ENCODE measurements at regions of chr14 and their contacts with region 1.

Region 1: DNA sequence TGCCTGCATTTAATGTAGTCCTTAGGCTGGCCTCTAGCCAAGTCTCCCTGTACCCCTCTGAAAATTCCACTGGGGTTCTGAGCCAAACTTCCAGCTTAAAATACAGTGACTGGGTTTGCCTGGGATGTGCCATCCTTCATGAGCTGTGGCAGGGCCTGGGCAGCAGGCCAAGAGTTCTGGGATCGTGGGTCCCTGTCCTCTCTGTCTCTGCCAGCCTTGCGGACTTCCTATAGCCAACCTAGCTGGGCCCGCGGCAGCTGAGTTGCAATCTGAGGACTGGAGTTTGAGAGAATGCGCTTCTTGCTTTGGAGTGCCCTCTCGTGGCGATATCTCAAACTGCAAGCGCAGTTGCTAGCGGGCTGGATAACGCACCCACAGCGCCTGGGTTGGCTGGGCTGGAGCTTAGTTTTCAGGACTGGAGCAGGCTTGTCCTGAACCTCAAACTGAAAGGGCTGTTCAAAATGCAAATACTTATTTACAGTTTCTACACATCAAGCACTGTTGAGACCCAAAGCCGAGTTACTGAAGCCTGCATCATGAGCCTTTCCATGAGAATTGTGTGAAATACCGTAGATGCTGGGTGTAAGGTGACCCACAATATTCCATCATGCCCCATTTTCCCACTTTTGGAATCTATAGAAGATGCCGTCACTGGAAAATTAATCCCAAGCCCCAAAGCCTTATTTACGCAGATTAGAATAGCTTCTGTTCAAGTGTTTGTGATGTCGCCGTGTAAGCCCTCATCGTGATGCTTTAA is 7.3 kb upstream of the IFI27L2 start:
- DNase-seq: peak; percentile 81 to 96 (median 91)
- ATAC-seq: peak; percentile 99
- H3K4me3 ChIP-seq: no peak overlapping the region
- H3K4me1 ChIP-seq: no peaks in the 10 kb centered on the region
- CTCF ChIP-seq: peak; percentile 97

Region 2: GRCh38 chr14:94036313-94037050 is 100.3 kb before region 1 on chr14:
- intact Hi-C with region 1: loop called (anchors 5 to 10 kb)
- DNase-seq: peak in 2 of 3 donors; percentile 83 to 93
- ATAC-seq: peak; percentile 89
- H3K4me3 ChIP-seq: no peak overlapping the region
- H3K4me1 ChIP-seq: peaks cover 4% of the 10 kb centered on the region
- CTCF ChIP-seq: peak; percentile 76

Region 3: DNA sequence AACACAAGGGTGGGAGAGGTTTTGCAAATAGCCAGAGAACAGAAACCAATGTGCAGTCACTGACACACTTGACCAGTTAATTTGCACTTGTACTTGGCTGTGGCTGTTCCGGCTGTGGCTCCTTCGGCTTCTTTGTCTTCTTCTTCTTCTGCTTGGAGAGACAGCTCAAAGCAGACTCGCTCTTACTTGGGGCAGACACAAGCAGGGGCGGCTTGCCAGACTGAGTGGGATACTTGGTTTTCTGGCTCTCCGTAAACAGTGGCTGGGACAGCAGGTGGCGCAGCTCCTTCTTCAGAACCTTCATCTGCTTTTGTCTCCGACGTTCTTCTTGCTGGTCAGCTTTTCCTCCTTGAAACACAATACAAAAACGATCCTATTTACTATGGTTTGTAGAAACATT is 85.6 kb before region 1 on chr14:
- intact Hi-C with region 1: no loop called
- DNase-seq: peak in 2 of 3 donors; percentile 61 to 76
- ATAC-seq: peak; percentile 57
- H3K4me3 ChIP-seq: no peak overlapping the region
- H3K4me1 ChIP-seq: no peaks in the 10 kb centered on the region
- CTCF ChIP-seq: peak; percentile 15

Region 4: GRCh38 chr14:94181835-94182234 is 45.1 kb after region 1 on chr14:
- intact Hi-C with region 1: loop called in 1 of 2 experiments (anchors 2 kb)
- DNase-seq: no peak
- ATAC-seq: no peak
- H3K4me3 ChIP-seq: no peak overlapping the region
- H3K4me1 ChIP-seq: no peaks in the 10 kb centered on the region
- CTCF ChIP-seq: no peak

Region 5: GRCh38 chr14:94521375-94522114 is 384.8 kb after region 1 on chr14:
- intact Hi-C with region 1: no loop called
- DNase-seq: no peak
- ATAC-seq: no peak
- H3K4me3 ChIP-seq: no peak overlapping the region
- H3K4me1 ChIP-seq: no peaks in the 10 kb centered on the region
- CTCF ChIP-seq: no peak

Measured in mucosa of descending colon (tissue), 3 donors.